ENCODE measurements at regions of chr12 and their contacts with region 1.

Region 1: DNA sequence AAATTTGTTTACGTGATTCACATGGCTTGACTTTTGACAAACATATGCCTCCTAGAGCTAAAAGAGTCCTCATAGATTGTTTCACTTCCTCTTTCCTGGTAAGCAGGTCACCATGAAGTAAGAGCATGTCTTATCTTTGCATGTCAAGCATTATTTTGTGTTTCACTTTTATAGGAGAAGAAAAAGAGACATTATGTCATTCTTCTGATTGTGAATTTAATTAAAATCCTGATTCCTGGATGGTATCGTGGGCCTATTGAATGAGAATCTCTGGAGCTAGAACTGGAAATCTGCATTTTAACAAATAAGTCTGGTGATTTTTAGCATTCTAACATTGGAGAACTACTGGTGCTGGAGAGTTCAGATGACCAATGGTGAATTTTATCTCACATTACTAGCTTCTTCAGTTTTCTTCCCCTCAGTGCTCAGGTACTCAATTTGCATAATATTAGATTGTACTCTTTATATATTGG is 218.6 kb upstream of the ATP2B1 start:
- DNase-seq: peak; percentile 79
- ATAC-seq: peak; percentile 91
- H3K4me3 ChIP-seq: peak overlapping the region; percentile 67
- H3K27ac ChIP-seq: peak overlapping the region; percentile 96
- H3K4me1 ChIP-seq: peaks cover 3% of the 10 kb centered on the region; the same call in 1 of the 2 replicates
- H3K27me3 ChIP-seq: no peaks in the 10 kb centered on the region
- CTCF ChIP-seq: no peak
- EP300 ChIP-seq: peak; percentile 85 to 97; a peak in 3 of 4 replicates
- POLR2A ChIP-seq: no peak
- RAD21 ChIP-seq: peak; percentile 29; the same call in 1 of the 2 replicates

Region 2: GRCh38 chr12:89756585-89757321 is 170.5 kb before region 1 on chr12:
- CTCF ChIA-PET with region 1: no interaction called
- POLR2A ChIA-PET with region 1: no interaction called
- RAD21 ChIA-PET with region 1: interaction called, 21 read pairs
- SMC1A ChIA-PET with region 1: interaction called, 11 read pairs
- in situ Hi-C with region 1: no loop called
- intact Hi-C with region 1: loop called (anchors 2 kb)
- DNase-seq: peak; percentile 97
- ATAC-seq: peak; percentile 89
- H3K4me3 ChIP-seq: no peak overlapping the region
- H3K27ac ChIP-seq: peak overlapping the region; percentile 90
- H3K4me1 ChIP-seq: peaks cover 44% of the 10 kb centered on the region
- H3K27me3 ChIP-seq: no peaks in the 10 kb centered on the region
- CTCF ChIP-seq: no peak
- EP300 ChIP-seq: peak; percentile 97 to 98
- POLR2A ChIP-seq: no peak
- RAD21 ChIP-seq: no peak

Region 3: GRCh38 chr12:89765959-89766824 is 161.1 kb before region 1 on chr12:
- CTCF ChIA-PET with region 1: no interaction called
- POLR2A ChIA-PET with region 1: no interaction called
- RAD21 ChIA-PET with region 1: interaction called, 21 read pairs
- SMC1A ChIA-PET with region 1: interaction called, 11 read pairs
- in situ Hi-C with region 1: no loop called
- intact Hi-C with region 1: no loop called
- DNase-seq: no peak
- ATAC-seq: peak; percentile 85
- H3K4me3 ChIP-seq: no peak overlapping the region
- H3K27ac ChIP-seq: peak overlapping the region; percentile 79
- H3K4me1 ChIP-seq: peaks cover 21% of the 10 kb centered on the region
- H3K27me3 ChIP-seq: no peaks in the 10 kb centered on the region
- CTCF ChIP-seq: no peak
- EP300 ChIP-seq: peak; percentile 81 to 91
- POLR2A ChIP-seq: no peak
- RAD21 ChIP-seq: 0 out of 2 replicates have a peak, but pooled peaks have one; percentile 7

Region 4: DNA sequence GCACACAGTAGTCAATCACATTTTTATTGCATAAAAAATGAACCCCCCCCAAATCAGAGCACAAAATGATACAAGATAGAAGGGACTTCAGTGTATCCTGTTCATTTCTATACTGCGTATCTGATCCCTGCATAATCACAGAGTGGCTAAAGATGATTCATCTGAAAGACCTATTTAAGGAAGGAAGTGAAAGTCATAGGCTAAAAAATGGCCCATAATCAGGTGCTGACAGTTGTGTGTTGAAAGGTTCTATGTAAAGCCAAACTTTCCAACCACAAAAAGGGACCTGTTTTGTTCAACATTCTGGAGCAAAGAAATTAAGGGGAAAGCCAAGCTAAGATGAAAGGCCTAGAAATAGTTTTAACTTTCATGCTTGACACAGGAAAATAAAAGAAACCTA is 70.8 kb before region 1 on chr12:
- CTCF ChIA-PET with region 1: interaction called, 5 read pairs
- POLR2A ChIA-PET with region 1: no interaction called
- RAD21 ChIA-PET with region 1: interaction called, 21 read pairs
- SMC1A ChIA-PET with region 1: interaction called, 9 read pairs
- in situ Hi-C with region 1: no loop called
- intact Hi-C with region 1: loop called (anchors 5 kb)
- DNase-seq: peak; percentile 85
- ATAC-seq: peak; percentile 90
- H3K4me3 ChIP-seq: no peak overlapping the region
- H3K27ac ChIP-seq: peak overlapping the region; percentile 42
- H3K4me1 ChIP-seq: peaks cover 43% of the 10 kb centered on the region
- H3K27me3 ChIP-seq: no peaks in the 10 kb centered on the region
- CTCF ChIP-seq: no peak
- EP300 ChIP-seq: peak; percentile 97
- POLR2A ChIP-seq: no peak
- RAD21 ChIP-seq: peak; percentile 27; the same call in 1 of the 2 replicates

Region 5: GRCh38 chr12:89862511-89863179 is 64.6 kb before region 1 on chr12:
- CTCF ChIA-PET with region 1: interaction called, 5 read pairs
- POLR2A ChIA-PET with region 1: interaction called, 12 read pairs
- RAD21 ChIA-PET with region 1: interaction called, 21 read pairs
- SMC1A ChIA-PET with region 1: interaction called, 26 read pairs
- in situ Hi-C with region 1: no loop called
- intact Hi-C with region 1: loop called (anchors 5 kb)
- DNase-seq: peak; percentile 79
- ATAC-seq: peak; percentile 75
- H3K4me3 ChIP-seq: peak overlapping the region; percentile 60
- H3K27ac ChIP-seq: peak overlapping the region; percentile 89
- H3K4me1 ChIP-seq: peaks cover 39% of the 10 kb centered on the region
- H3K27me3 ChIP-seq: no peaks in the 10 kb centered on the region
- CTCF ChIP-seq: no peak
- EP300 ChIP-seq: peak in 1 of 2 experiments; percentile 17; a peak in 1 of 4 replicates
- POLR2A ChIP-seq: peak; percentile 58
- RAD21 ChIP-seq: 0 out of 2 replicates have a peak, but pooled peaks have one; percentile 19

Region 6: DNA sequence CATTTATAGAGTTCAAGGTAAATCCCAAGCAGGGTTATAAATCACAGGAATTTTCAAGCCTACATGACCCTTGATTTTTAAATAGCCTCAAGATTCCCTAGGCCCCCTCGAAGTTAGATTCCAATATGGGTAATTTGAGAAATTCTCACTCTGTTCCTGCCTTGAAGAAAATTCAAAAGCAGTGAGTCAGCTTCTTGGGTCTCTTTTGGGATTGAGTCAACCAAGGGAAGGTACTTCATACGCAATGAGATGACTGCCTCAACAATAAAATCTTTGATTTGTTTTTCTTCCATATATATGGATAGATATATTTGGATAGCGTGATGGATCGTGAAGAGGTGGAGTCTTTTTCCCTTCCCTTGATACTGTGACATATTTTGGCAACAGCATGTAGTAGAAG is 38.2 kb before region 1 on chr12:
- CTCF ChIA-PET with region 1: interaction called, 3 read pairs
- POLR2A ChIA-PET with region 1: interaction called, 6 read pairs
- RAD21 ChIA-PET with region 1: interaction called, 17 read pairs
- SMC1A ChIA-PET with region 1: interaction called, 45 read pairs
- in situ Hi-C with region 1: loop called (anchors 5 kb)
- intact Hi-C with region 1: no loop called
- DNase-seq: no peak
- ATAC-seq: no peak
- H3K4me3 ChIP-seq: no peak overlapping the region
- H3K27ac ChIP-seq: no peak overlapping the region
- H3K4me1 ChIP-seq: no peaks in the 10 kb centered on the region
- H3K27me3 ChIP-seq: no peaks in the 10 kb centered on the region
- CTCF ChIP-seq: no peak
- EP300 ChIP-seq: no peak
- POLR2A ChIP-seq: no peak
- RAD21 ChIP-seq: no peak

Region 7: DNA sequence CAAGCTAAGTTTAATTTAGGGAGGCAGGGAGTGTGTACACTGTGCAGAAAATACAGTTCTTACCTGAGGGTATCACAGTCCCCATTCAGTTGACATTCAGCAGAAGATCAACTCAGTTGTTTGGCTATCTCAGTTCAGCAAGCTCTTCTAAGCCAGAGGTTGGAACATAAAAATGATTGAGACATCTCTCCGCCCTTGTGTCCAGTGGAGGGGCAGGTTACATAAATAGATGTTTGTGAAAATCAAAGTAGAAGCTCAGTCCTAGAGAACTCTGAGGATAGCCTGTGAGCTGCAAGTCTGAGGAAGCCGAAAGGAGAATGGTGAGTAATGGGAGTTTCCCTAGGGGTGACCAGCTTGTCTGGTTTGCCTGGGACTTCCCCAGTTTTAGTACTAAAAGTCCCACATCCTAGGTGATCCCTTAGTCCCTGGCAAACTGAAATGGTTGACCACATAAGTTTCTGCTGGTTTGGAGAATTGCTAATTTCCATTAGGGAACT is 32.8 kb after region 1 on chr12:
- CTCF ChIA-PET with region 1: interaction called, 8 read pairs
- POLR2A ChIA-PET with region 1: interaction called, 6 read pairs
- RAD21 ChIA-PET with region 1: interaction called, 58 read pairs
- SMC1A ChIA-PET with region 1: interaction called, 33 read pairs
- in situ Hi-C with region 1: no loop called
- intact Hi-C with region 1: no loop called
- DNase-seq: peak; percentile 68
- ATAC-seq: peak; percentile 90
- H3K4me3 ChIP-seq: peak overlapping the region; percentile 65; the same call in 1 of the 2 replicates
- H3K27ac ChIP-seq: peak overlapping the region; percentile 71
- H3K4me1 ChIP-seq: peaks cover 9% of the 10 kb centered on the region
- H3K27me3 ChIP-seq: no peaks in the 10 kb centered on the region
- CTCF ChIP-seq: no peak
- EP300 ChIP-seq: peak in 1 of 2 experiments; percentile 55; a peak in 1 of 4 replicates
- POLR2A ChIP-seq: no peak
- RAD21 ChIP-seq: no peak

Measured in GM12878 (cell line).